HCT116 (cell line): ENCODE measurements at regions of chr2 and their contacts with region 1.

Region 1: DNA sequence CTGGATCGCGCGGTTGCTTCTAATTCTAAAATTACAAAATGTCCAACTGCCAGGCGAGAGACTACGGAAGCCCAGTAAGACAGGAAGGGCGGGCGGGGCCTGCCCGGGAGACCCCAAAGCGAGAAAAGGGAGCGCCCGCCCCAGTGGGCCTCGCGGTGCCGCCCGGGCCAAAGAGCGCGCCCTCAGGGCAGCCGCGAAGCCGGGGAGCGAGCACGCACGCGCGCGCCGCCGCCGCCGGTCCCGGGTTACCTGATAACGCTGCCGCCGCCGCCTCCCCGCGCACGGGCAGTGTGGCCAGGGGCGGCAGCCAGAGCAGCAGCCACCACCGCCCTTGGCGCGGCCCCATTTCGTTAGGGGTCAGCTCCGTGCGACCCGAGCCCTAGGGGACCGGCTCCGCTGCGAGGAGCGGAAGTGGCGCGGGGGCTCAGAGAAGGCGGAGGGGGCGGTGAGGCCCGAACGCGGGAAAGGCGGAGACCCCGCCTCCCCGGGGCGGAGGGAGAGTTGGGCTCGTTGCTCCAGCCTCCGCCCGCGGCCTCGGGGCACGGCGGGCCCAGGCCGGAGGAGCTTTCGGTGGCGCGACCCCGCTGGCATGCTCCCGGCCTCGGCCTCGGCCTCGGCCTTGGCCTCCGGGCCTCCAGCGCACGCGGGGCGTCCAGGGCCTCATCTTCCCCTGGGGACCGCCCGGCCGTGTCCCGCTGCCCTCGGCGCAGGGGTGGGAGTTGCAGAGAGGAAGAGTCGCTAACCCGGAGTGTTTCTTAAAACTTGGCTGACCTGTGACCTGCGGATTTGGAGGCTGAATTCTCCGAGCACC is at the start of gene NEMP2:
- DNase-seq: no peak
- ATAC-seq: peak; percentile 87
- H3K4me3 ChIP-seq: peak within 1 kb of the TSS; percentile 62 to 69
- H3K27ac ChIP-seq: peak within 1 kb of the TSS; percentile 70
- H3K4me1 ChIP-seq: peaks cover 8 to 40% of the 10 kb centered on the region in 2 experiments; a peak in 3 of 4 replicates
- H3K27me3 ChIP-seq: no peaks in the 10 kb centered on the region
- CTCF ChIP-seq: no peak
- POLR2A ChIP-seq: peak; percentile 72
- RAD21 ChIP-seq: no peak
- total RNA-seq, gene NEMP2: 8.6 TPM

Region 2: DNA sequence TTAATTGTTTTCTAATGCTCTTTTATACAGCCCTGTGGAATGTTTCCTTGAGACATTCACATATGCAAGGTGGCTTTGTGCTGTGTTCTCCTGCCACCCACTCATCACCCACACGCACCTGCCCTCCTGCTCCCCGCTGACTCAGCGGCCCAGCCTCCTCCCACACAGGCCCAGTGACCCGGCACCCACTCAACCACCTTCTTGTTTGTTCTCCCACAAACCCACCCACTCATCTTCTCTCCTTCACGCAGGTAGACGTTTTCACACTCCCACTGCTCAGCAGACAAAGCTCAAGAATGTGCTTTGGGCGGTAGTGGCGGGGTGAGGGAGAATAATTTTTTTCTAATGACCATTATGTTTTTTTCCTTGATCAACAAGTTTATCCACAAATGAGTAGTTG is 28.6 kb after region 1 on chr2:
- CTCF ChIA-PET with region 1: no interaction called
- POLR2A ChIA-PET with region 1: no interaction called
- RAD21 ChIA-PET with region 1: no interaction called
- intact Hi-C with region 1: no loop called
- DNase-seq: no peak
- ATAC-seq: no peak
- H3K4me3 ChIP-seq: no peak overlapping the region
- H3K27ac ChIP-seq: no peak overlapping the region
- H3K4me1 ChIP-seq: peaks cover 4 to 11% of the 10 kb centered on the region in 2 experiments; a peak in 2 of 4 replicates
- H3K27me3 ChIP-seq: no peaks in the 10 kb centered on the region
- CTCF ChIP-seq: no peak
- POLR2A ChIP-seq: no peak
- RAD21 ChIP-seq: no peak

Region 3: DNA sequence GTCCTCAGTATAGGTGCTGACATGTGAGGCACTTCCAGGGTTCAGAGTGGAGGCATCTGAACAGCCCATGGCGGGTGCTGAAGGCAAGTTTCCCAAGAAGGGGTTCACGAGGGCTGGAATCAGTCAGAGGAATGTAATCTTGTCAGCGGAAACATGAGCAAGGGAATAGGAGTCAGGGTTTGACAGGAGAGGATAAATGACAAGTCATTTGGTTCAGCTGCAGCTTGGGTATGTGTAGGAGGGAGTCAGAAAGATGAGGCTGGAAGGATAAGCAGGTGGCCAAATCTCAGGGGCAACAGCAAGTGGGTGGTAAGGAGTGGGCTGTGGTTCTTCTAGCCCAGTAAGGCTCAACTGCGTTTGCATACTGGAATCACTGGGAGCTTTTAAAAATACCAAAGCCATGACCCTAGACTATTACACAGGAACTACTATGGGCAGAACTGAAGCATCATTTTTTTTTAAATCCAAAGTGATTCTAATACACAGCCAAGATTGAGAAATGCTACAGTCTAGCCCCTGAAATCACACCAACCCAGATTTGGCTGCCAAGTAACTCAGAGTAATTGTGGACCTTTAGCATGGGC is 72.6 kb after region 1 on chr2:
- CTCF ChIA-PET with region 1: no interaction called
- POLR2A ChIA-PET with region 1: no interaction called
- RAD21 ChIA-PET with region 1: no interaction called
- intact Hi-C with region 1: loop called (anchors 2 kb)
- DNase-seq: peak; percentile 60
- ATAC-seq: peak; percentile 51
- H3K4me3 ChIP-seq: peak overlapping the region; percentile 22 to 55
- H3K27ac ChIP-seq: peak overlapping the region; percentile 82
- H3K4me1 ChIP-seq: peaks cover 41 to 84% of the 10 kb centered on the region in 2 experiments
- H3K27me3 ChIP-seq: no peaks in the 10 kb centered on the region
- CTCF ChIP-seq: no peak
- POLR2A ChIP-seq: peak; percentile 42
- RAD21 ChIP-seq: 0 out of 2 replicates have a peak, but pooled peaks have one; percentile 1

Region 4: GRCh38 chr2:190843874-190844699 is 309.6 kb after region 1 on chr2:
- CTCF ChIA-PET with region 1: no interaction called
- POLR2A ChIA-PET with region 1: no interaction called
- RAD21 ChIA-PET with region 1: no interaction called
- intact Hi-C with region 1: loop called (anchors 5 kb)
- DNase-seq: peak; percentile 85
- ATAC-seq: peak; percentile 81
- H3K4me3 ChIP-seq: peak overlapping the region in 1 of 2 experiments; percentile 34; a peak in 2 of 4 replicates
- H3K27ac ChIP-seq: peak overlapping the region; percentile 55; the same call in 1 of the 2 replicates
- H3K4me1 ChIP-seq: peaks cover 25 to 75% of the 10 kb centered on the region in 2 experiments
- H3K27me3 ChIP-seq: no peaks in the 10 kb centered on the region
- CTCF ChIP-seq: no peak
- POLR2A ChIP-seq: no peak
- RAD21 ChIP-seq: no peak; the same call in 1 of the 2 replicates